Esophagus squamous epithelium (tissue), 5 donors: ENCODE measurements at regions of chr15 and their contacts with region 1.

Region 1: DNA sequence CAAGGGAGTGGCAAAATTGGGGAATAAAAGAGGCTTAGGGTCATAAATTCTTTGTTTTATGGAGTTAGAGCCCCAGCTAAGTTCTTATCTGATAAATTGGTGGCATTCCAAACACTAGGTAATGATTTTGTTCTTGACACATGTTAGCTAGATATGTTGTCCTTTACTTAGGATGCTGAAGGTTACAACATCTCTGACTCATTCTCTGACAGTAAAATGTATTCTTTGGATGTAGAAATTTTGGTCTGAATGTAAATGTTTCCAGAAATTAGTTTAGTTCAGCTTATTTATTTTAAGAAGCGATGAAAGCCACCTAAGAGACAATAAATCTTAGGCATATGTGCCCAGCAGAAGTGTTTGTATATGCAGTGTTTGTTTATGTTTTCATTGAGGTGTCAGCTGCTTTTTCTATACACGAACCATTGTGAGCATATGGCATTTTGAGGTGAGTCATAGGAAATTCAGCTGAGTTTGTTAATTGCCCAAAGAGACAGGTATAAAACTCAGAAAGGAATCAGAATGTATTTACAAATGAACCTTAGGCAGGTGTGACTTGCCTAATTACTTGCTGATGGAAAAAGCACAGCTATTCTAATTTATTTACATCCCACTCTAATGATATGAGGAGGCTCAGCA is 247.7 kb downstream of the AGBL1 start:
- DNase-seq: no peak
- H3K4me3 ChIP-seq: no peak overlapping the region
- H3K27ac ChIP-seq: peak overlapping the region in 2 of 4 donors; percentile 18 to 46
- H3K4me1 ChIP-seq: peaks cover 5 to 28% (median 10%) of the 10 kb centered on the region in 3 donors
- H3K27me3 ChIP-seq: no peaks in the 10 kb centered on the region
- CTCF ChIP-seq: no peak
- POLR2A ChIP-seq: no peak

Region 2: DNA sequence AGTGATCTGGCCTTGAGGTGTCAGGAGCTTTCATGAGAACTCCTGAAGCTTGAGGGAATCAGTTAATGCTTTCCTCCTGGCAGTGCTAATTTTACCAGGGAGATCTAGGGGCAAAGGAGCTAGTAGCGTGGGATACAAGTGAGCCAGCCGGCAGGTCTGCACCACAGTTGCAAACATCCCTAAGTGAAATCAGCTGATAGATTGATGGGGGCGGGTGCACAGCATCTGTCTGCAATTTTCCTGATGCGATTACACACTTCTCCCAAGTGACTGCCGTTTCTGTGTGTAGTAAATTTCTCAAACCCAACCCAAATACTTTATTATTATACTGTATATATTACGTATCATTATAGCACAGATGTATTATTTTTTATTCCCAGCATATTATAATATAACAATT is 56.8 kb after region 1 on chr15:
- intact Hi-C with region 1: loop called (anchors 10 kb)
- DNase-seq: no peak
- H3K4me3 ChIP-seq: no peak overlapping the region
- H3K27ac ChIP-seq: no peak overlapping the region
- H3K4me1 ChIP-seq: no peaks in the 10 kb centered on the region
- H3K27me3 ChIP-seq: peaks cover 0 to 3% (median 0%) of the 10 kb centered on the region in 4 donors
- CTCF ChIP-seq: no peak
- POLR2A ChIP-seq: no peak